ENCODE measurements at regions of chr5 and their contacts with region 1.

Region 1: DNA sequence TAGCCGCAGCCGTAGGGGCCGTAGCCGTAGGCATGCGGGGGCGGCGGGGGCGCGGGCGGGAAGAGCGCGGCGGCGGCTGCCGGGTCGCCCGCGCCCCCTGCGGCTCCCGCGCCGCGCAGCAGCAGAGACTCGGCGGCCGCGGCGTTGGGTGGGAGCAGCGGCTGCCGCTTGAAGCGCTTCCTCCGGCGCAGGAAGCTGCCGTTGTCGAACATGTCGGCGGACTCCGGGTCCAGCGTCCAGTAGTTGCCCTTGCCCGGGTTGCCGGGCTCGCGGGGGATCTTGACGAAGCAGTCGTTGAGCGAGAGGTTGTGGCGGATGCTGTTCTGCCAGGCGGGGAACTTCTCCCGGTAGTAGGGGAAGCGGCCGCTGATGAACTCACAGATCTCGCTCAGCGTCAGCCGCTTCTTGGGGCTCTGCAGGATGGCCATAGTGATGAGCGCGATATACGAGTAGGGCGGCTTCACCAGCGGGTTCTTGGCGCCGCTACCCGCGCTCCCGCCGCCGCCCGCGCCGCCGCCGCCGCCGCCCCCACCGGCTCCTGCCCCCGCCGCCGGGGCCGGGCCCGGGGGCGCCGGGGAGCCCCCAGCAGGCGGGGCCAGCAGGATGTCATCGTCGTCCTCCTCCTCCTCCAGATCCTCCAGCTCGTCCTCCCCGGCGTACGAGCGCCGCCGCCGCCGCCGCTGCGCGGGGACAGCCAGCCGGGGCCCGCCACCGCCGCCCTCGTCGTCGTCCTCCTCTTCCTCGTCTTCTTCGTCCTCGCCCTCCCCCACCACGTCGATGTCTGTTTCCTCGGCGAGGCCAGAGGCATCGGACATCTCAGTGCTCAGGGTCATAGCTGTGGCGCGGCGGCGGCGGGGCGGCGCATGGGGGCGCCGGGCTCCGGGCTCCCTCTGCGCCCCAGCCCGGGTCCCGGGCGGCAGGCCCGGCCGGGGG is 781 bp downstream of the FOXD1 start:
- DNase-seq: peak; percentile 61
- H3K4me3 ChIP-seq: peak overlapping the region; percentile 57
- H3K27ac ChIP-seq: no peak overlapping the region
- H3K4me1 ChIP-seq: peaks cover 15% of the 10 kb centered on the region
- H3K27me3 ChIP-seq: peaks cover 78% of the 10 kb centered on the region
- CTCF ChIP-seq: no peak

Region 2: DNA sequence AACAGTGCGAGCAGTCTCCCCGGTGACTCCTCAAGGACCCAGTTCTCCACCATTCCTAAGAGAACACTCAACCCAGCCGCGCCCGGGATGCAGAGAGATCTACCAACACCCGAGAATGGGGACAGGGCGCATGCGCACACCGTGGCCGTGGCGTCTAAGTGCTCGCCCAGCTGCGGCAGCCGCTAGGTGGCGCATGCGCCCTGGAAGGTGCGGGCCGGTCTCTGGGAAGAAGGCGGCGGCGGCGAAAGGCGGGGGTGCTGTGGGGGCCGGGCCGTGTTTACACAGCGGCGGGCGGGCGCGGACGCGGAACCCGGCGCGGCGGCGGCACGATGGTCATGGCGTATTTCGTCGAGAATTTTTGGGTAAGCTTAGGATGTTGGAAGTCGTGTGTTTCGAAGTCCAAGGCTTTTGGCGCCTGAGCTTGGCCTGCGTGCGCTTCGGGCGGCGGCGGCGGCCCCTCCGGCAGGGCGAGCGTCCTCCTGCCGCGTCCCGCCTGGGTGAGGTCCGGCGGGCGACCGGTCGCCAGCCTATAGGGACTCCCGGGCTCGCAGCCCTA is 491.9 kb before region 1 on chr5 and contains the start of gene FCHO2:
- CTCF ChIA-PET with region 1: no interaction called
- POLR2A ChIA-PET with region 1: no interaction called
- intact Hi-C with region 1: loop called (anchors 2 kb)
- DNase-seq: peak; percentile 96
- H3K4me3 ChIP-seq: peak within 1 kb of the TSS; percentile 72
- H3K27ac ChIP-seq: peak within 1 kb of the TSS; percentile 54
- H3K4me1 ChIP-seq: peaks cover 5% of the 10 kb centered on the region
- H3K27me3 ChIP-seq: peaks cover 37% of the 10 kb centered on the region
- CTCF ChIP-seq: peak; percentile 85
- total RNA-seq, gene FCHO2: 2.5 and 5.8 TPM in 2 replicates

Region 3: GRCh38 chr5:75381456-75381855 is 1933.7 kb after region 1 on chr5:
- CTCF ChIA-PET with region 1: no interaction called
- POLR2A ChIA-PET with region 1: no interaction called
- intact Hi-C with region 1: no loop called
- DNase-seq: no peak
- H3K4me3 ChIP-seq: no peak overlapping the region
- H3K27ac ChIP-seq: no peak overlapping the region
- H3K4me1 ChIP-seq: no peaks in the 10 kb centered on the region
- H3K27me3 ChIP-seq: no peaks in the 10 kb centered on the region
- CTCF ChIP-seq: no peak